ENCODE measurements at regions of chr5 and their contacts with region 1.

Region 1: GRCh38 chr5:178732281-178732680 is 1.8 kb upstream of the ZNF354A start:
- DNase-seq: no peak
- H3K4me3 Mint-ChIP-seq: no peak overlapping the region
- H3K27ac Mint-ChIP-seq: no peak overlapping the region
- H3K4me1 Mint-ChIP-seq: peaks cover 7% of the 10 kb centered on the region
- H3K27me3 Mint-ChIP-seq: no peaks in the 10 kb centered on the region

Region 2: GRCh38 chr5:178751286-178751685 is 19.0 kb after region 1 on chr5:
- intact Hi-C with region 1: no loop called
- DNase-seq: no peak
- H3K4me3 Mint-ChIP-seq: no peak overlapping the region
- H3K27ac Mint-ChIP-seq: no peak overlapping the region
- H3K4me1 Mint-ChIP-seq: no peaks in the 10 kb centered on the region
- H3K27me3 Mint-ChIP-seq: no peaks in the 10 kb centered on the region

Region 3: GRCh38 chr5:178859625-178860531 is 127.6 kb after region 1 on chr5 and contains the start of gene ZNF354B:
- intact Hi-C with region 1: loop called (anchors 1 kb)
- DNase-seq: peak; percentile 95
- H3K4me3 Mint-ChIP-seq: peak within 1 kb of the TSS; percentile 89
- H3K27ac Mint-ChIP-seq: peak within 1 kb of the TSS; percentile 83
- H3K4me1 Mint-ChIP-seq: peaks cover 16% of the 10 kb centered on the region
- H3K27me3 Mint-ChIP-seq: no peaks in the 10 kb centered on the region
- total RNA-seq, gene ZNF354B: 13.5 and 17.0 TPM in 2 replicates

Region 4: GRCh38 chr5:179008661-179009060 is 276.4 kb after region 1 on chr5:
- intact Hi-C with region 1: no loop called
- DNase-seq: no peak
- H3K4me3 Mint-ChIP-seq: no peak overlapping the region
- H3K27ac Mint-ChIP-seq: no peak overlapping the region
- H3K4me1 Mint-ChIP-seq: no peaks in the 10 kb centered on the region
- H3K27me3 Mint-ChIP-seq: no peaks in the 10 kb centered on the region

Region 5: DNA sequence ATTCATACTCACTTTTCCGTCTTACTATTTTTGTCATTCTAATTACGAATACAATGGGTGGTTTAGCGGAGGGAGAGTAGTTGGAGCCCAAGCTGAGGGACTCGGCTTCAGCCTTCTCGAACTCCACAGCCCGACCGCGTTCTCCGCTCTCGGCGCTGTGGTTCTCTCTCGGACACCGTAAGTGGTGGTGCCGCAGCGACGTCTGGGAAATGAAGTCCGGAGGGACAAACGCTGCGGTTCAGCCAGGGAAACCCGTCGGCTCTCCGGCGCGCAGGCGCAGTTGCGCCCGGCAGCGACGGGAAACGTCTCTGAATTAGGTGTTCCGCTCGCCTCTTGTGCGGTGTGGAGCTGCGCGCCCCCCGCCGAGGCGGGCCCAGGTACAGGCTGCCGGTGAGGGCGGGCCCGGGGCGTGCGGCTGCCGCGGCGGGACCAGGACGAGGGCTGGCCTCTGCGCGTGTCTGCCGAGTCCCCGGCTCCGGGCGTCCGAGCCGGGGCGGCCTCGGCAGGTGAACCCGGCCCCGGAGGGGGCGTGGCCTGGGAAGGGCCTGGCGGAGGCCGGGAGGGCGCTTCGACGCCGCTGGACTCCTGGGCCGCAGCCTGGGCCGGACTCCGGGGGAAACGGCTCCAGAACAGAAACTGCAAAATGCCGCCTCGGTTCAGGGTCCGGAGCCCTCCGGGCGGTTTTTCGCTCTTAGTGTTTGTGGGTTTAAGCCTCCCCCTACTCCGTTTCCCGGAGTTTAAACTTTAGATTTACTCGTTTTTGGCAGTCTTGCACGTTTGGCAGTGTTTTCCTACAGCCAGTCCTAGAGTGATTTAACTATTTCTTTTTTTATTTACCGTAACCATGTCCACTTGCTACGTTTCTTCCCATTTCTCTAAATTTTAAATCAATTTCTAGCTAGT is 291.5 kb after region 1 on chr5 and contains the start of gene ZNF879:
- intact Hi-C with region 1: loop called (anchors 1 kb)
- DNase-seq: peak; percentile 97
- H3K4me3 Mint-ChIP-seq: peak within 1 kb of the TSS; percentile 89
- H3K27ac Mint-ChIP-seq: peak within 1 kb of the TSS; percentile 79
- H3K4me1 Mint-ChIP-seq: peaks cover 5% of the 10 kb centered on the region
- H3K27me3 Mint-ChIP-seq: no peaks in the 10 kb centered on the region
- total RNA-seq, gene ZNF879: 2.7 and 3.8 TPM in 2 replicates

Region 6: DNA sequence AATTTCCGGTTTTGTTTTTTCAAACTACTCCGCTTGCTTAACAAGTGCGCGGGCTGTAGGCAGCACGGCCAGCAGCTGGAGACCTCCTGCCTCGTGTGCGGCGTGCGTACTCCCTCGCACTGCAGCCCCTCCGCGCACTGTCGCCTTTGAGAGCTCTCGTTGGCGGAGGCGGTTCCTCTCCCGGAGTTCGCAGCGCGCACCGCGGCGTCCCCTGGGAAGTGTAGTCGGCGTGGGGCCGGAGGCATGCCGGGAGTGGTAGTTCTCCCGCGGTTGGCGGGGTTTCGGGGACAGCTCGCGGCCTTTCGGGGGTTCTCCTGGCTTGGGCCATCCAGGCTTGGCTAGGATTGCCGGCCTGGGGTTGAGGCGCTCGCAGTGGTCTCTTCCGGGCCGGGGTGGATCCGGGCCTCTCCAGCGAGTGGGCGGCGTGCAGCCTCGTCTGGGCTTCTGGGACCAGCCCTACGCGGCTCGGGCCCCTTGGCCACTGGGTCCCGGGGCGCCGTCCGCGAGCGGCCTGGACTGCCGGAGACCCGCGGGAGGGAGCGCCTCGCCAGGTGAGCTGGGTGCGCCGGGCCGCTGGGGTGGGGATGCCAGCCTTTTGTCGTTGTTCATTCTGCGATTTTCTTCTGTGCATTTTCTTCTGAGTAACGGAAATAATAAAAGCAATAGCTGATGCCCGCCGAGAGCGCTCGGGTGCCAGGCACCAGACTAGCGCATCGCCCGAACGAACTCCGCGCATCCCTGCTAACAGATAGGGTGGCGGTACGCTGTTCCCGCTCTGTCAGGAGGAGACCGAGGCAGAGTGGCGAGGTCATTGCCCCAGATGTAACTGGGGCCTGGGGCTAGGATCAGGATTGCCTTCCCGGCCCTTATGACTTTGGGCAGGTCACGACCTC is 328.1 kb after region 1 on chr5 and contains the start of gene ZNF354C:
- intact Hi-C with region 1: loop called (anchors 1 kb)
- DNase-seq: peak; percentile 94
- H3K4me3 Mint-ChIP-seq: peak within 1 kb of the TSS; percentile 91
- H3K27ac Mint-ChIP-seq: peak within 1 kb of the TSS; percentile 87
- H3K4me1 Mint-ChIP-seq: peaks cover 12% of the 10 kb centered on the region
- H3K27me3 Mint-ChIP-seq: no peaks in the 10 kb centered on the region
- total RNA-seq, gene ZNF354C: 4.0 and 4.5 TPM in 2 replicates

Region 7: DNA sequence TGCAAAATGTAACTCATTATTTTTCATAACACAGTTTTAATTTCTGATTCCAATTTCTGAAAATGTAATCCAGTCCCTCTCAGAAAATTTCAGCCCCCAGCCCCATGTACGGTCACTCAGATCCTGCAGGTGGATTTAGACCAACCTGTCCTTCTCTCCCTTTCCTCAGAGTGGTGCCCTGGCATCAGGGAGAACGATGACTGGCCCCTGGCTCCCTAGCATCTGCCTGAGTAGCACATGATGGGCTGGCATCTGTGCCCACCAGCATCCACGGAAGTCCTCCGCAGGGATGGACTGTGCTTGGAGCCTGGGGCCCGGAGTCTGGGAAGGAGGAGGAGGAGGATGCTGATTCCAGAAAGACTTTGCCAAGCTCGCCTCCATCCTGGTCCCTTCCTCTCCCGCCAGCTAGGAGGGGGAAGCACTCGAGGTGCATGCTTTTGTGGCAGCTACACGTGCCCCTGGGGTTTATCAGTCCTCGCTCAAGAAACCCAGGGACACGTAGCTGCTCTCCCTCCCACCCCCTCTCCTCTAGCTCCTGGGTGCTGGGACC is 763.7 kb after region 1 on chr5:
- intact Hi-C with region 1: loop called (anchors 2 kb)
- DNase-seq: no peak
- H3K4me3 Mint-ChIP-seq: no peak overlapping the region
- H3K27ac Mint-ChIP-seq: no peak overlapping the region
- H3K4me1 Mint-ChIP-seq: no peaks in the 10 kb centered on the region
- H3K27me3 Mint-ChIP-seq: no peaks in the 10 kb centered on the region